ENCODE measurements at regions of chr11 and their contacts with region 1.

Region 1: GRCh38 chr11:73760679-73761402 is at the start of gene RAB6A:
- DNase-seq: peak; percentile 97
- ATAC-seq: peak; percentile 88
- H3K4me3 Mint-ChIP-seq: peak within 1 kb of the TSS; percentile 91
- H3K27ac Mint-ChIP-seq: peak within 1 kb of the TSS; percentile 88
- H3K4me1 Mint-ChIP-seq: peaks cover 22% of the 10 kb centered on the region
- H3K27me3 Mint-ChIP-seq: no peaks in the 10 kb centered on the region
- CTCF ChIP-seq: no peak
- total RNA-seq, gene RAB6A: 53.3 and 61.0 TPM in 2 replicates

Region 2: DNA sequence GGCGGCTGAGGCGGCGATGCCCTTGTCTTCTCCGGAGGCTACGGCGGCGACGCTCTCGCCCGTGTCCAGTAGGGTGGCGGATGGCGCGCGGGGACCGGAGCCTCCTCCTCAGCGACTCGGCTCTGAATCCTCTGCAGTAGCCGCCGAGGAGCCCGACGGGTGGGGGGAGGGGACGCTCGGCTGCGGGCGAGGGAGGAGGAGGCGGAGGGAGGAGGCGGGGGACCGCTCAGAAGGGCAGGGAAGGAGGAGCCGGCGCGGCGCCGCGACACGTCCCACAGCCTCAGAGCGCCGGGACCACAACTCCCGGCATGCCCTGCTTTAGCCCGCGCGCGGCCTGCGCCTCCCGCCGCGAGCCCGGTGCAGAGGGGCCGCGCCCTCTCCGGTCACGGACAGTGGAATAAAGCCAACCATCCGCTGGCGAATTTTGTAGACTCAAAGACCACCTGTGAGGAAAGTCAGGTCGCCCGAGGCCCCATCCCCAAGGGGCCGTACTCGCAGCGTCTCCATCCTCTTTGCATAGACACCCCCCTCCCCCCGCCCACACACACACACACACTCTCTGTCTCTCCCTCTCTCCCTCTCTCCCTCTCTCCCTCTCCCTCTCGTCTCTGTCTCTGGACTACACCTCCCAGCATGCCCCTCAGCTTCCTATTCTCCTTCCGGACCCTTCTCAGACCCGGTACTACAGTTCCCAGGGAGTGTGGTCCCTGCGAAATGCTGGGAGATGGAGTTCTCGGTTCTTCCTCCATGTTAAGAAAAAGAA is 162.7 kb before region 1 on chr11 and contains the start of gene FAM168A:
- CTCF ChIA-PET with region 1: interaction called, 3 read pairs
- POLR2A ChIA-PET with region 1: no interaction called
- intact Hi-C with region 1: loop called (anchors 1 kb)
- DNase-seq: peak; percentile 81
- ATAC-seq: peak; percentile 93
- H3K4me3 Mint-ChIP-seq: peak within 1 kb of the TSS; percentile 92
- H3K27ac Mint-ChIP-seq: peak within 1 kb of the TSS; percentile 88
- H3K4me1 Mint-ChIP-seq: peaks cover 26% of the 10 kb centered on the region
- H3K27me3 Mint-ChIP-seq: no peaks in the 10 kb centered on the region
- CTCF ChIP-seq: no peak
- total RNA-seq, gene FAM168A: 14.1 and 16.5 TPM in 2 replicates

Region 3: GRCh38 chr11:73779084-73779902 is 18.5 kb after region 1 on chr11:
- CTCF ChIA-PET with region 1: interaction called, 16 read pairs
- POLR2A ChIA-PET with region 1: interaction called, 133 read pairs
- intact Hi-C with region 1: loop called (anchors 1 kb)
- DNase-seq: peak; percentile 94
- ATAC-seq: peak; percentile 99
- H3K4me3 Mint-ChIP-seq: peak overlapping the region; percentile 94
- H3K27ac Mint-ChIP-seq: peak overlapping the region; percentile 98
- H3K4me1 Mint-ChIP-seq: peaks cover 8% of the 10 kb centered on the region
- H3K27me3 Mint-ChIP-seq: peaks cover 2% of the 10 kb centered on the region
- CTCF ChIP-seq: no peak

Region 4: GRCh38 chr11:73787643-73788537 is 27.0 kb after region 1 on chr11 and contains the start of gene MRPL48:
- CTCF ChIA-PET with region 1: no interaction called
- POLR2A ChIA-PET with region 1: interaction called, 17 read pairs
- intact Hi-C with region 1: loop called (anchors 1 kb)
- DNase-seq: peak; percentile 84
- ATAC-seq: peak; percentile 100
- H3K4me3 Mint-ChIP-seq: peak within 1 kb of the TSS; percentile 100
- H3K27ac Mint-ChIP-seq: peak within 1 kb of the TSS; percentile 100
- H3K4me1 Mint-ChIP-seq: peaks cover 15% of the 10 kb centered on the region
- H3K27me3 Mint-ChIP-seq: no peaks in the 10 kb centered on the region
- CTCF ChIP-seq: no peak
- total RNA-seq, gene MRPL48: 38.3 and 40.6 TPM in 2 replicates

Region 5: DNA sequence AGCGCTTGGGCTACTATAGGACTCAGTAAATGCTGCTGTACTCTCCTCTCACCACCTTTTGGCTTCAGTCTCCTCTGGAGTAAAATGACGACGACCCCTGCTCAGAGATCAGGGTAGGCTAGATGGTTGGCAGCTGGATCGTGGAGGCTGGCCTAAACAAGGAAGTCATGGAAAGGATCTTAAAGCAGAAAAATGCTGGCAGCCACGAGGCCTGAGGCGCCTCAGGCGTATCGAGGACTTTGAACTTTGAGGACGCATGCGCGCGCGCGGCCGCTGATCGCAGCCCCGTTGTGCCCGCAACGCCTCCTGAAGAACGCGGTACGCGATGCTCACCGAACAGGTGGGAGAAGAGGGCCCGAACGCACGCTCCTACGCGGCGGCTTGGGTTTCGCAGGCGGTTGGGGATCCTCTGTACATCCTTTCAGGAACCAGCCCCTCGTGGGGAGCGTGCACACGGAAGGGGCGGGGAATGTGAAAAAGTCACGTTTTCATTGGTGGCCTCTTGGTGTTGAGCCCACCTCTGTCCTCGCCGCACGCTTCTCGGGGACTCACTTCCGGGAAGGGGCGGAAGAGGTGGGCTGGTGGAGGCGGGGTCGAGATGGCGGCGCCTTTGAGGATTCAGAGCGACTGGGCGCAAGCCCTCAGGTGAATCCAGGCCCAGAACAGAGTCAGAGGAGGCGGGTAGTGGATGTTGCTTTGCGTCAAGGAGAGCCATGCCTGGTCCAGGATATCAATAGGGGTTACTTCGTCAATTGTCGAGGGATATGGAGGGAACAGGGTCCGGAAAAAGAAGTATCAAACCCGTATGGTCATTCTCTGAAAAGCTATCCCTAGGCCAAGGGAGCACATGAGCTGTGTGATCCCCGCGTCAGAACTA is 115.8 kb after region 1 on chr11 and contains the starts of genes COA4 and PAAF1:
- CTCF ChIA-PET with region 1: no interaction called
- POLR2A ChIA-PET with region 1: interaction called, 5 read pairs
- intact Hi-C with region 1: loop called (anchors 1 kb)
- DNase-seq: peak; percentile 80
- ATAC-seq: peak; percentile 98
- H3K4me3 Mint-ChIP-seq: peak within 1 kb of the TSS; percentile 99
- H3K27ac Mint-ChIP-seq: peak within 1 kb of the TSS; percentile 98
- H3K4me1 Mint-ChIP-seq: peaks cover 34% of the 10 kb centered on the region
- H3K27me3 Mint-ChIP-seq: no peaks in the 10 kb centered on the region
- CTCF ChIP-seq: no peak
- total RNA-seq, gene COA4: 75.9 and 79.8 TPM in 2 replicates
- total RNA-seq, gene PAAF1: 19.6 and 20.2 TPM in 2 replicates

Region 6: DNA sequence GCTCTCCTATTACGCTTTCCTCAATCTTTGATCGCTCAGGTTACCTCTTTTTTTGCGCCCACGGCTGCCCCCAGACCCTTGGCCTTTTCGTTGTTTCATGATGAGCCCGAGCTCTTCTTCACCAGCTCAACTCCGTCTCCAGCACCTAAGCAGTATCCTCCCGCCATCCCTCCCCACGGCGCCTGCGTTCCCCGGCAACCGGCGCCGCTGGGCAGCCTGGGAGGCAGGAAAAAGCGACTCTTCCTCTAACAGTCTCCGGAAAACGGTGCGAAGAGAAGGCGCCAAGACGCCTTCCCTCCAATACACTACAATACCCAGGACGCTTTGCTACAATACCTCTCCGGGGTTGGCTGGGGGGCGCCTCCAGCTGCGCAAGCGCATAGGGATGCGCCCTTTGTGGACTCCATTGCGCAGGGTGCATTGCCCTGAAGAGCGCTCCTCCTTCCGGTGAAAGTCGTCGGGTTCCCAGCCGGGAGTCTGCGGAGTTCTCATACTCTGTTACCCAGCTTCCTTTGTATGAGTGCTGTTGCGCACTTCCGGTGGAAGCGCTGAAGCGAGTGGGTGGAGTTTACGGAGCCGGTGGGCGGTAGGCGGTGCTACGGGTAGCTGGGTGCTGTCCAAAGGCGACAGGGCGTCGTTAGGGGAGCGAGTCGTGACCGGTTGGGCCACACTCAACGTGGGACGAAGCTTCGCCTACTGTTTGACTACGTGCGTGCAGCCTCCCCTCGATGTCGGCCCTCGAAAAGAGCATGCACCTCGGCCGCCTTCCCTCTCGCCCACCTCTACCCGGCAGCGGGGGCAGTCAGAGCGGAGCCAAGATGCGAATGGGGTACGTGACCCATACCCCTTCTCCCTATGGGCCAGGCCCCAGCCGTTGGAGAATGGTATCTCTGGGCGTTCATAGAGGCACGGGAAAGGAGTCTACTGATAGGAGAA is 410.1 kb after region 1 on chr11 and contains the starts of genes C2CD3 and PPME1:
- CTCF ChIA-PET with region 1: no interaction called
- POLR2A ChIA-PET with region 1: no interaction called
- intact Hi-C with region 1: loop called (anchors 1 kb)
- DNase-seq: peak; percentile 94
- ATAC-seq: peak; percentile 93
- H3K4me3 Mint-ChIP-seq: no peak within 1 kb of the TSS
- H3K27ac Mint-ChIP-seq: no peak within 1 kb of the TSS
- H3K4me1 Mint-ChIP-seq: peaks cover 12% of the 10 kb centered on the region
- H3K27me3 Mint-ChIP-seq: no peaks in the 10 kb centered on the region
- CTCF ChIP-seq: no peak
- total RNA-seq, gene C2CD3: 36.2 and 50.3 TPM in 2 replicates
- total RNA-seq, gene PPME1: 12.4 and 17.3 TPM in 2 replicates

Measured in activated B cell treated with CpG ODN at 0.5 μM for 24 hours (primary cell).